ENCODE measurements at regions of chr2 and their contacts with region 1.

Region 1: GRCh38 chr2:200471324-200471848 is 38.5 kb downstream of the KCTD18 start:
- DNase-seq: no peak
- H3K4me3 ChIP-seq: no peak overlapping the region
- H3K27ac ChIP-seq: no peak overlapping the region
- H3K4me1 ChIP-seq: no peaks in the 10 kb centered on the region
- H3K27me3 ChIP-seq: no peaks in the 10 kb centered on the region
- CTCF ChIP-seq: peak in 2 of 3 donors; percentile 28 to 48
- POLR2A ChIP-seq: no peak

Region 2: DNA sequence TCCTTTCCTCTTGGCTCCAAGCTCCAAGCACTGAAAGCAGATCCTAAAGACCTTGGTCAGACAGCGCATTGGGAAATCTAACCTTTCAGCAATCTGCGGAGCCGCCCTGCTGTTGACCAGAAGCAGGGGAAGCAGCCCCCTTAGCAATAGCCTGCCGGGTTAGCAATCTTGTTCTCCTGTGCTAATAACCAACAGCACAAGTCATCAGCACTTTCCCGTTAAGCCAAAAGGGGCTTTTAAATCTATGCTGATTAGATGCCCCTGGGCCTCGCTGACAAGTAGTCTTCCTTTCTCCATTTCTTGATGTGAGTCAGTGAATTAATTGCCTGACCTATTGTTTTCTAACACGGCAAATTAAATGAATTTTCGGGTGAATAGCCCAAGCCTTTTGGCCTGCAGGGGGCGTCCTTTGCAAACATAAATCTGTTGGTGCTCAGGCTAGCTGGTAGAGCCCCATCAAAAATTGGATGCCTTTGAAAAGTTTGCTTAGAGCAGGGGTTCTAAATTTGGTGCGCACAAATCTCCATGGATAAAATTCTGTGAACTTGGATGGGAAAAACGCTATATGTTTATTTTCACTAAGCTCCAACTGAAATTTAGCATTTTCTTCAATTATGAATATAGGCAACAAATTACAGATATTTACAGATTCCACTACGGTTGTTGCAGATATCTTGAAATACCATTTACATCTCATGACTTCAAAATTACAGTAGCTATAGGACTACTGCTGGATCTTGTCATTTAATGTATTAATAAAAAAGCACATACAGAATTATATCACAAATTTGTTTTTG is 491.4 kb before region 1 on chr2:
- intact Hi-C with region 1: loop called (anchors 10 kb)
- DNase-seq: peak; percentile 65 to 84
- H3K4me3 ChIP-seq: peak overlapping the region in 2 of 3 donors; percentile 12 to 47
- H3K27ac ChIP-seq: peak overlapping the region in 1 of 2 donors; percentile 3
- H3K4me1 ChIP-seq: no peaks in the 10 kb centered on the region
- H3K27me3 ChIP-seq: no peaks in the 10 kb centered on the region
- CTCF ChIP-seq: peak; percentile 69 to 88 (median 76)
- POLR2A ChIP-seq: no peak